Activated CD4-positive, alpha-beta T cell treated with anti-CD3 and anti-CD28 coated beads, Interleukin-2, amount 10 ng/mL, durations not matched to agents 24 days and 14 days (primary cell): ENCODE measurements at regions of chr21 and their contacts with region 1.

Region 1: DNA sequence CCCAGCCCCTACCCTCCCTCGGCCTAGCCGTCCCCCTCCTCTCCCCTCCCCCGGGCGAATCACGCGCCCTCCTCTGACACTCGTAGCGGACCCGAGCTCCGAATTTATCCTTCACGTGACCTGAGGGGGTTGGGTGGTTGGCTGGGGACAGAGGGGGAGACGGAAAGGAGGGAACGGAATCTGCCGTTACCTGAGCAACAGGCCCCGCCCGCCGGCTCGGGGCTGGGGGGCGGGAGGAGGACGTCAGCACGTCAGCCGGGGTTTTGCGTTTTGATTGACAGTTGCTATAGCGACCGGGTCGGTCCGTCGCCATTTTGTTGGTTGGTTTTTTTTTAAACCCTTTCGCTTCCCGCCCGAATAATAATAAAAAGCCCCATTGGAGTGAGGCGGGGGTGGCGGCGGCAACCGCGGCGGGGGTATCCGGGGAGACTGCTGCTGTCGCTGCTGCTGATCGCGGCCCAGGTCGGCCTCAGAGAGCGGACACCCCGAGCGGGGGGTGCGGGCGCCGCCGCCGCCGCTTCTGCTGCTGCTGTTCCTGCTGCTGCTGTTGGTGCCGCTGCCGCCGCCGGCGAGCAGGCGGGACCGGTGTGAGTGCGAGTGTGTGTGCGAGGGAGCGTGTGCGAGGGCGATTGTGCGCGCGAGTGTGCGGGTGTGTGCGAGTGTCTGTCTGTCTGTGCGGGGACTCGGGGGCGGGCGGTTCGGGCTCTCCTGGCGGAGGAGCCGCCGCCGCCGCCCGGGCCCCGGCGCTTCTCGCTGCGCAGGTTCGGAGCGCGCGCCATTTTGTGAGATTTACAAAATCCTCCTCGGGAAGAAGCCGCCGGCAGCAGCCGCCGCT is at the start of gene DYRK1A:
- DNase-seq: peak; percentile 99
- H3K4me3 Mint-ChIP-seq: peak within 1 kb of the TSS; percentile 99
- H3K27ac Mint-ChIP-seq: peak within 1 kb of the TSS; percentile 100
- H3K4me1 Mint-ChIP-seq: peaks cover 39% of the 10 kb centered on the region
- H3K27me3 Mint-ChIP-seq: peaks cover 3% of the 10 kb centered on the region
- total RNA-seq, gene DYRK1A: 60.9 and 64.9 TPM in 2 replicates

Region 2: DNA sequence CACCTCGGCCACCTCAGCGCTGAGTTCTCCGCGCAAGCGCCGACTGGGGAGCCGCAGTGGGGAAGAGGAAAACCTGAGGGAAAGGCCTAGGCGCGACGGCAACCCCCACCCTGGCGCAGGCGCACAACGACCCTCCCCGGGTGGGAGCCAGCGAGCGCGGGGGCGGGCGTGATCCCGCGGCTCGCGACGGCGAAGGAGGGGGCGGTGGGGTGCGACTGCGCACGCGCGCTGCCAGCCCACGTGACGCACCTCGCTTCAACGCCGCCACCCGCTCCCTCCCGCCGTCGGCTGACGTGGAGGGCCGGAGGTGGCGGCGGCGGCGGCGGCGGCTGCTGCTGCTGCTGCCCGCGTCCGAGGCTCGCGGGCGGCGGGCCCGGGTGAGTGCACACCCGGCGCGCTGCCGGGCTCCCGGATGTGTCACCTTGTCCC is 293.7 kb before region 1 on chr21 and contains the starts of genes PIGP and TTC3:
- intact Hi-C with region 1: loop called (anchors 2 kb)
- DNase-seq: peak; percentile 99
- H3K4me3 Mint-ChIP-seq: peak within 1 kb of the TSS; percentile 94
- H3K27ac Mint-ChIP-seq: peak within 1 kb of the TSS; percentile 96
- H3K4me1 Mint-ChIP-seq: peaks cover 33% of the 10 kb centered on the region
- H3K27me3 Mint-ChIP-seq: peaks cover 5% of the 10 kb centered on the region
- total RNA-seq, gene PIGP: 19.0 and 19.4 TPM in 2 replicates
- total RNA-seq, gene TTC3: 62.4 and 63.0 TPM in 2 replicates

Region 3: DNA sequence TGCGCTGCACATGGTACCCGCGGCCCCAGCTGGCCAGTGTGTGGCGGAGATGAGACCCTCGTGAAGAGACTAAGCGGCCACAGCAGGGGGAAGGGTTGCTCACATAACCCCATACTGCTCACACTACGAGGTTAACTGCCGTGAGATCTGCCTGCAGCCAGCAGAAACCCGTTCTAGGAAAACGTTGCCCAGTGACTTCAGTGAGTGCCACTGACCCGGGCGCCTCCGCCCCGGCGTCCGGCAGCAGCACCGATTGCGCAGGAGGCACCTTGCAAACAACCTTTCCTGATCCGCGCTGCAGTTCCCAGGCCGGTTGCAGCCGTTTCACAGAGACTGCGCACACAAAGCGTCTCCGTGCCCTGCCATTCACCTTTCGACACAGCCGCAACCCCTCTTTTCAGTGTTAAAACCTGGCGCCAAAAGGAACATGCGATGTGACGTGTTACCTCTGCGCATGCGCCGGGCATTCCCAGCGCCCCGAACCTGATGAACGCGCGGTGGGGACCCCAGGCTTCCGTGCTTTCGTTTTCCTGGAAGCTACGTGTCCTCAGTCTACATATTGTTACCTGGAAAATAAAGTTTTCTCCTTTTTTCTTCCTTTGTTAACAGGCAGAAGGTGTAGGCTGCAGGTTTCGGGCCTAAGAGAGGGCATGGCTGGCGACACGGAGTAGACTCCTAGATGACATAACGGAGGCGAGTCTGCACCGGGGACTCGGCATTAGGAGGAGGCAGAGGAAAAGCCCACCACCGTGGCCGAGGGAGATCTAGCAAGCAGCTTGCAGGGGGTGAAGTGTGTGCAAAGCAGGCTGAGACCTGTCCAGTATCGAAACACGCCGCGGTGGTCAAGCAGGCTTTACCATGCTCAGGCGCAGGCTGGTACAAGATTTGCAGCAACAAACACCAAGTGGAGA is 108.5 kb before region 1 on chr21:
- intact Hi-C with region 1: loop called (anchors 2 kb)
- DNase-seq: peak; percentile 96
- H3K4me3 Mint-ChIP-seq: peak overlapping the region; percentile 97
- H3K27ac Mint-ChIP-seq: peak overlapping the region; percentile 99
- H3K4me1 Mint-ChIP-seq: peaks cover 39% of the 10 kb centered on the region
- H3K27me3 Mint-ChIP-seq: peaks cover 2% of the 10 kb centered on the region

Region 4: GRCh38 chr21:37407719-37408420 is 41.2 kb after region 1 on chr21:
- intact Hi-C with region 1: loop called (anchors 1 kb)
- DNase-seq: peak; percentile 53
- H3K4me3 Mint-ChIP-seq: peak overlapping the region; percentile 27
- H3K27ac Mint-ChIP-seq: peak overlapping the region; percentile 75
- H3K4me1 Mint-ChIP-seq: peaks cover 56% of the 10 kb centered on the region
- H3K27me3 Mint-ChIP-seq: no peaks in the 10 kb centered on the region

Region 5: DNA sequence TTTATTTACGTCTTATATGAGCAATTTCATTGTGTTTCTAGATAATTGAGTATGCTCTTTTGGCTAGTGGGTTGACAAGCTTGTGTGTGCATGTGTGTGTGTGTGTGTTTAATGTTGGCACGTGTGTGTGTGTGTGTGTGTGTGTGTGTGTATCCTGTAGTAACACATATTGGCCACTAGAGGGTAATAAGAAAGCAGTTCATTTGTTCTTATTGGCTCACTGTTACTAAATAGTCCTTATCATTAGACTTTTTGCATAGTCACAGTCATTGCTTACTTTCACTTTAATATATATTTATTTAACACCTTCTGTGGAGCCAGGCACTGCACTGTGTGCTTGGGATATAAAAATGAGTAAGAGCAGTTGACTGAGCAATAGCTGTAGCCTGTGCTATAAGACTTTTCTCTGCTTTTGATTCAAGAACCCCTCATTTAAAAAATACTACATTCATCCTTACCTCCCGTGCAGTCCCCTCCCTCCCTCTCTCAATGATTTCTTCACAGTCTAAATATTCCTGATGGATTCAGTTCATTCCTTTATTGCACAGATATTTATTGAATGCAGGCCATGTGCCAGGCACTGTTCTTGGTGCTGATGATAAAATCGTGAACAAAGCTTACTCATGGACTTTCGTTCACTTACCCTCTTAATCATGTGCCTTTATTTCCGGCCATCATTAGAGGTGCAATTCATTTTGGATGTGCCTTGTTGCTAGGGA is 96.5 kb after region 1 on chr21:
- intact Hi-C with region 1: loop called (anchors 2 kb)
- DNase-seq: peak; percentile 77
- H3K4me3 Mint-ChIP-seq: no peak overlapping the region
- H3K27ac Mint-ChIP-seq: peak overlapping the region; percentile 48
- H3K4me1 Mint-ChIP-seq: peaks cover 46% of the 10 kb centered on the region
- H3K27me3 Mint-ChIP-seq: no peaks in the 10 kb centered on the region